ENCODE measurements at regions of chr4 and their contacts with region 1.

Region 1: GRCh38 chr4:23999714-24000469 is 110.0 kb upstream of the PPARGC1A start:
- DNase-seq: no peak
- ATAC-seq: no peak
- H3K4me3 ChIP-seq: no peak overlapping the region
- H3K27ac ChIP-seq: no peak overlapping the region
- H3K4me1 ChIP-seq: no peaks in the 10 kb centered on the region
- H3K27me3 ChIP-seq: no peaks in the 10 kb centered on the region
- CTCF ChIP-seq: no peak

Region 2: DNA sequence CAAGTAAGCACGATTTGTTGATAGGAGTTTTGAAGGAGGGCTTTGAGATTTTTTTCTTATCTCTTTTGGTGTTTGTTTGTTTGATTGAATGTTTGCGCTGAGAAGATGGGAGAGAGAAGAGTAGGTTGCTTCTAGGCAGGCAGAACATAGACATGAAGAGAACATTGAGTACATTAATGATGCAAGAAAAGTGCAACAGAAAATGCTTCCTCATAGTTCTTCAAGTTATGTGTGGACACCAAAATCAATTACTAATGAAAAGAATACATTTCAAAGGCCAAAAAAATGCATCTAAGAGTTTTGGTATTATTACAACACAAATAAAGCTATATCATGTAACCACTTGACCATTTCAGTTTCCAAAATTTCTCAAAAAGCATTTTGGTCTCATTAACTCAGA is 81.0 kb after region 1 on chr4:
- CTCF ChIA-PET with region 1: no interaction called
- POLR2A ChIA-PET with region 1: no interaction called
- in situ Hi-C with region 1: no loop called
- intact Hi-C with region 1: no loop called
- DNase-seq: no peak
- ATAC-seq: no peak
- H3K4me3 ChIP-seq: no peak overlapping the region
- H3K27ac ChIP-seq: no peak overlapping the region
- H3K4me1 ChIP-seq: no peaks in the 10 kb centered on the region
- H3K27me3 ChIP-seq: no peaks in the 10 kb centered on the region
- CTCF ChIP-seq: no peak

Region 3: GRCh38 chr4:24434241-24434640 is 434.3 kb after region 1 on chr4:
- CTCF ChIA-PET with region 1: interaction called, 12 read pairs
- POLR2A ChIA-PET with region 1: no interaction called
- in situ Hi-C with region 1: no loop called
- intact Hi-C with region 1: no loop called
- DNase-seq: no peak
- ATAC-seq: no peak
- H3K4me3 ChIP-seq: no peak overlapping the region
- H3K27ac ChIP-seq: no peak overlapping the region
- H3K4me1 ChIP-seq: no peaks in the 10 kb centered on the region
- H3K27me3 ChIP-seq: no peaks in the 10 kb centered on the region; the same call in 1 of the 2 replicates
- CTCF ChIP-seq: no peak

Region 4: DNA sequence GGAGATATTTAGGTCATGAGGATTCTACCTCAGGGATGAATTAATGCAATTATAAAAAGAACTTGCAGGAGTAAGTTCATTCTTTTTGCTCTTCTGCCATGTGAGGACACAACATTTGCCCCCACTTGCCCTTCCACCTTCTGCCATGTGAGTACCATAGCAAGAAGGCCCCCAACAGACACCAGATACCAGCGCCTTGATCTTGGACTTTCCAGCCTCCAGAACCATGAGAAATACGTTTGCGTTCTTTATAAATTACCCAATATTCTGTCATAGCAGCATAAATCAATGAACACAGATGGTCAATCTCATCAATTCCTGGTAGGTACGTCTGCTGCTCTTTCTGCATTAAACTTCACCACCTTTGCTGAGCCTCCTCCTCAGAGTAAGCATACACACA is 1166.0 kb after region 1 on chr4:
- CTCF ChIA-PET with region 1: interaction called, 10 read pairs
- POLR2A ChIA-PET with region 1: no interaction called
- in situ Hi-C with region 1: no loop called
- intact Hi-C with region 1: no loop called
- DNase-seq: no peak
- ATAC-seq: no peak
- H3K4me3 ChIP-seq: no peak overlapping the region
- H3K27ac ChIP-seq: no peak overlapping the region
- H3K4me1 ChIP-seq: peaks cover 7% of the 10 kb centered on the region
- H3K27me3 ChIP-seq: no peaks in the 10 kb centered on the region
- CTCF ChIP-seq: no peak